ENCODE measurements at regions of chr17 and their contacts with region 1.

Region 1: DNA sequence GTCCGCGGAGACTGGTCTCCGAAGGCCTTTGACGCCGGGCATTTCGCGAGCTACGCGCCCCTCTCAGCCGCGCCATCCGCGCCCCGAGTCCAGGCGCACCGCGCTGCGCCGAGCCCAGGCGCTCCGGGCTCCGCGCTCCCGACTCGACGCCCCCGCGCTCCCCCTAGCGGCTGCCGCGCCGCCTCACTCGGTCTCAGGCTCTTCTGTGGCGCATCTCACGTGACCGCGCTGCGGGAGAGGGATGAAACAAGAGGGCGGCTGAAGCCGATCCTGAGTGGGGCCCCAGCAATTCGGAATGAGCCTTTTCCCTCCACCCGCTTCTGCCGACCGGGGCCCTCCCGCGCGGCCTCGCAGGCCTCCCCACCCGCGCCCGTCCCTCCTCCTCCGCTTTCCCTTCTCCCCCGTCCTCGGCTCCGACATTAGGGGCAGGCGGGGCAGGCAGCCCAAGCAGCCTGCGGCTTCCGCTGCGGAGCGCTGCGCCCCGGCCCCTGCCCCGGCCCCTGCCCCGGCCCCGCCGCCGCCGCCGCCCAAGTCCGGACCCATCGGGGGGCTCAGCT is 42.5 kb upstream of the AMZ2 start:
- DNase-seq: peak; percentile 90 to 91
- ATAC-seq: peak; percentile 83 to 92
- H3K4me3 ChIP-seq: peak overlapping the region; percentile 84
- H3K27ac ChIP-seq: peak overlapping the region; percentile 87 to 94
- H3K4me1 ChIP-seq: peaks cover 9% of the 10 kb centered on the region; the same call in 1 of the 3 replicates
- CTCF ChIP-seq: peak; percentile 87
- EP300 ChIP-seq: no peak
- POLR2A ChIP-seq: peak; percentile 71
- RAD21 ChIP-seq: peak in 1 of 2 experiments; percentile 51; a peak in 3 of 5 replicates

Region 2: DNA sequence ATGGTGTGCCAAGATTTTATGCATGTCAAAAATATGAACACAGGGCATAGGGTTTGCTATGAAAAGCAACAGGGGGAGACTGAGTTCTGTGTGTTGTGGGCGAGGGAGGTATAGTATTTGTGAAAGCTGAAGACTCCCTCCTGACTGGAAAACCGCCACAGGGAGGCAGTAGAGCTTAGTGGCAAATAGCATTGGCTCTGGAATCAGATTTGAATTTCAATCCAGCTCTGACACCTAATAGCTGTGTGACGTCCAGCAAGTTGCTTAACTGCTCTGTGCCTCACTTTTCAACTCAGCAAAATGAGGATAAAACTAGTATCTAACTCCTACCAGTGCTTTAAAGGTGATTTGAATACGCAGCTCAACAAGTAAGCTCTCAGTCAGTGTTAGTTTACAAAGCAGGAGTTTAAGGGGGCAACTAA is 147.8 kb before region 1 on chr17:
- CTCF ChIA-PET with region 1: interaction called, 10 read pairs
- POLR2A ChIA-PET with region 1: no interaction called
- DNase-seq: peak in 1 of 2 experiments; percentile 66
- ATAC-seq: peak; percentile 84 to 86
- H3K4me3 ChIP-seq: no peak overlapping the region
- H3K27ac ChIP-seq: no peak overlapping the region
- H3K4me1 ChIP-seq: no peaks in the 10 kb centered on the region; the same call in 2 of the 3 replicates
- CTCF ChIP-seq: peak; percentile 67
- EP300 ChIP-seq: no peak
- POLR2A ChIP-seq: no peak
- RAD21 ChIP-seq: peak; percentile 60 to 64

Region 3: DNA sequence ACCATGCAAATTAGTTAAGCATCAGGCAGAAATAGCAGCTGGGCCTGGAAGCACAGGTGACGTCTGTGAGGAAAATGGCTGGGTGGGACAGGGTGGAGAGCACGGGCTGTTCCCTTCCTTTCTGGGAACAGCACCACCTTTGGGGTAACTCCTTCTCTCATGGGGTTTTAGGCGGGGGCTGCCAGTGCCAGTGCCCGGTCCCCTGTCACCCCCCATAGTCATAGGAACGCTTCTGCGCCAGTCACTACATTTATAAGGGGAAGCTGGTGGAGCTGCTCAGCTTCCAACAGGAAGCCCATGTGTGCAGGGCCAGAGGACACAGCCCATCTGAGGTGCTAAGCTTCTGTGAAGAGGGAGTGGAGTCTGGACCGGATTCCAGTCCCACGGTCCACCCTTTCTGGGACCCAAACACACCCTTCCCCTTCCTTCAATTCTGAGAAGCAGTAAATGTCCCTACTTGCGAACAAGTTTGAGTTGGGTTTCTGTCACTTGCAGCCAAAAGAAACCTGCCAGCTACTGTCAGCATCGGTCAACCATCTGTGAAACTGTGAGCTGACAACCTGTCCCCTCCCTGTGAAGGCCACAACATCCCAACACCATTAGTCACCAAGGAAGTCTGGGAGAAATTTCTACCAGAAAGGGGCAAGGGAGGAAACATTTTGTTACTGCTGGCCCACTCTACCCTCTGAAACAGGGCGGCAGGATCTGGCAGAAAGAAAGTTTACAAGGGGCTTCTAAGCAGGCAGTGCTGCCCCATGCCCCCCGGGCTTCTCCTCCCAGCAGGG is 43.5 kb before region 1 on chr17:
- CTCF ChIA-PET with region 1: interaction called, 135 read pairs
- POLR2A ChIA-PET with region 1: no interaction called
- DNase-seq: no peak
- ATAC-seq: 0 out of 6 replicates have a peak, but pooled peaks of 1 of the 2 experiments have one; percentile 33
- H3K4me3 ChIP-seq: no peak overlapping the region
- H3K27ac ChIP-seq: no peak overlapping the region
- H3K4me1 ChIP-seq: no peaks in the 10 kb centered on the region
- CTCF ChIP-seq: no peak
- EP300 ChIP-seq: no peak
- POLR2A ChIP-seq: no peak
- RAD21 ChIP-seq: no peak

Region 4: GRCh38 chr17:68184816-68185436 is 20.4 kb before region 1 on chr17:
- CTCF ChIA-PET with region 1: interaction called, 68 read pairs
- POLR2A ChIA-PET with region 1: no interaction called
- DNase-seq: no peak
- ATAC-seq: no peak
- H3K4me3 ChIP-seq: no peak overlapping the region
- H3K27ac ChIP-seq: no peak overlapping the region
- H3K4me1 ChIP-seq: no peaks in the 10 kb centered on the region
- CTCF ChIP-seq: no peak
- EP300 ChIP-seq: no peak
- POLR2A ChIP-seq: no peak
- RAD21 ChIP-seq: no peak

Region 5: DNA sequence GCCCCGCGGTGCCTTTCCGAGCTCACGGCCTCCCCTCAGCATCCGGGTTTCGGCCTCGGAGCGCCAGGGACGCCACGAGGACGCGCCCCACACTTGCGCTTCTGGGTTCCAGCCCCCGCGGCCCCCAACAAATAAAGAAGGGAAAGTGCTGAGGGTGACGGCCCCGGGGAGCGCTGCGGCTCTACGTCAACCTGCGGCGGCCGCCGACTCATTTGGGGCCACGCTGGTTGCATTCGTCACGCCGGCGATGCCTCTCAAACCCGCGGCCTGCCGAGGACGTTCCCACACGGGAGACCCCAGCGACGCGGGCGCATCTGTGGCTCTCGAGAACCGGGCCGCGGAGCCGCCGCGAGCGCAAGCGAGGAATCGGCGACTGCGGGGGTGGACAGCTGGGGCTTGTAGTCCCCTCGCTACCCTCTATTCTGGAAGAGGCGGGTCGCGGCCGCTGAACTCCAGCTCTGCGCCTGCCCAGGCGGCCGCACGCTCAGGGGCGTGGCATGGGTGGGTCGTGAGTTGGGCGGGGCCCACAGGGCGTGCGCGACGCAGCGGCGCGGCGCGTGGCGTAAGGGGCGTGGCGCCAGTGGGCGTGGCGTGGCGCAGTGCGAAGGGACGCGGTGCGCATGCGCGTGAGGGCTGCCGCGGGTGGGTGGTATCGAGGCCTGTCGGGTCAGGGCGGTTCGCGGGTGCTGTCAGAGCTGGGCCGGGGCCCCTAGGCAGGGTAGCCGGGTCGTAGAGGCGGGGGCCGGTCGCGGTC is 42.3 kb after region 1 on chr17 and contains the start of gene AMZ2:
- CTCF ChIA-PET with region 1: interaction called, 22 read pairs
- POLR2A ChIA-PET with region 1: interaction called, 6 read pairs
- DNase-seq: peak; percentile 85 to 96
- ATAC-seq: peak; percentile 95 to 98
- H3K4me3 ChIP-seq: peak within 1 kb of the TSS; percentile 67
- H3K27ac ChIP-seq: peak within 1 kb of the TSS; percentile 87 to 94
- H3K4me1 ChIP-seq: peaks cover 9% of the 10 kb centered on the region; the same call in 2 of the 3 replicates
- CTCF ChIP-seq: no peak
- EP300 ChIP-seq: no peak
- POLR2A ChIP-seq: peak; percentile 87
- RAD21 ChIP-seq: no peak
- polyA plus RNA-seq, gene AMZ2: 186 and 201 TPM in 2 replicates

Region 6: DNA sequence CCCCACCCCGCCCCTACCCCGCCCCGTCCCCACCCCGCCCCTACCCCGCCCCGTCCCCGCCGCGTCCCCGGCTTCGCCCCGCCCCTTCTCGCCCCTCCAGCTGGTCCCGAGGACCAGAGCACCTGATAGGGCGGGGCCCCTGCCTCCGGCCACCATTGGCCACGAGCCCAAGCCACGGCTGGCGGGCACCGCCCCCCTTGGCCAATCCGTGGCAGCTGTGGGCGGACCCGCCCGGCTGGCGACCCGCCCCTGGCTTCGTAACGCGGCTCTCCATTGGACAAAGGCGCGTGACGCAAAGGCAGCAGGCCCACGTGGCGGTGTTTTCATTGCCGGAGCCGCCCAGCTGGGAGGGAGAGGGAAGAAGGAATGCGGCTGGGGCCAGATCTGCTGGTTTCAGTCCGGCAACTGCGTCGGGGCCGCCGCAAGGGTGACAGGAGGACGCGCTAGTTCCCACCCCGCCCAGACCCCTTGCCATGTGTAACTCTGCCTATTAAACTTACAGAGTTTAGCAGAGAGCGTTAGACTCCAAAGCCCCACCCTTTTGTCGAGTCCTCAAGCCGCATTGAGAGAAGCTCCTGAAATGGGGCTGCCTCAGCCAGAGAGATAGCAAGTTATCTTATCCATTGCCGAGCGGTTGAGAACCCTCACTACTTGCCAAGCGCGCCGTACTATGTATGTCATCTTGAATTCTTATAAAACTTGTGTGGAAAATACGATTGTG is 252.4 kb after region 1 on chr17:
- CTCF ChIA-PET with region 1: interaction called, 14 read pairs
- POLR2A ChIA-PET with region 1: interaction called, 4 read pairs
- DNase-seq: peak; percentile 97 to 98
- ATAC-seq: peak; percentile 87 to 93
- H3K4me3 ChIP-seq: peak overlapping the region; percentile 92
- H3K27ac ChIP-seq: no peak overlapping the region
- H3K4me1 ChIP-seq: peaks cover 17% of the 10 kb centered on the region
- CTCF ChIP-seq: no peak
- EP300 ChIP-seq: no peak
- POLR2A ChIP-seq: no peak
- RAD21 ChIP-seq: no peak

Region 7: GRCh38 chr17:68463211-68464019 is 258.1 kb after region 1 on chr17:
- CTCF ChIA-PET with region 1: interaction called, 14 read pairs
- POLR2A ChIA-PET with region 1: no interaction called
- DNase-seq: no peak
- ATAC-seq: no peak; a peak in 1 of 6 replicates
- H3K4me3 ChIP-seq: no peak overlapping the region
- H3K27ac ChIP-seq: no peak overlapping the region
- H3K4me1 ChIP-seq: peaks cover 7% of the 10 kb centered on the region; the same call in 2 of the 3 replicates
- CTCF ChIP-seq: no peak; the same call in 2 of the 3 replicates
- EP300 ChIP-seq: no peak
- POLR2A ChIP-seq: no peak
- RAD21 ChIP-seq: no peak